Activated CD4-positive, alpha-beta memory T cell treated with anti-CD3 and anti-CD28 coated beads, Interleukin-2, amount 10 ng/mL, durations not matched to agents 7 days and 5 days (primary cell): ENCODE measurements at regions of chr16 and their contacts with region 1.

Region 1: GRCh38 chr16:30429678-30430427 is at the start of gene DCTPP1:
- DNase-seq: peak; percentile 97
- H3K4me3 Mint-ChIP-seq: no peak within 1 kb of the TSS
- H3K27ac Mint-ChIP-seq: no peak within 1 kb of the TSS
- H3K4me1 Mint-ChIP-seq: peaks cover 39% of the 10 kb centered on the region
- H3K27me3 Mint-ChIP-seq: no peaks in the 10 kb centered on the region
- total RNA-seq, gene DCTPP1: 51.3 to 51.4 TPM

Region 2: GRCh38 chr16:30091474-30092372 is 338.1 kb before region 1 on chr16 and contains the start of gene TBX6:
- CTCF ChIA-PET with region 1: interaction called, 11 read pairs
- POLR2A ChIA-PET with region 1: interaction called, 3 read pairs
- DNase-seq: peak; percentile 95
- H3K4me3 Mint-ChIP-seq: peak within 1 kb of the TSS; percentile 88
- H3K27ac Mint-ChIP-seq: peak within 1 kb of the TSS; percentile 96
- H3K4me1 Mint-ChIP-seq: peaks cover 63% of the 10 kb centered on the region
- H3K27me3 Mint-ChIP-seq: no peaks in the 10 kb centered on the region
- total RNA-seq, gene TBX6: 1.9 to 2.5 TPM

Region 3: GRCh38 chr16:30340621-30341020 is 89.2 kb before region 1 on chr16:
- CTCF ChIA-PET with region 1: no interaction called
- POLR2A ChIA-PET with region 1: no interaction called
- DNase-seq: no peak
- H3K4me3 Mint-ChIP-seq: no peak overlapping the region
- H3K27ac Mint-ChIP-seq: no peak overlapping the region
- H3K4me1 Mint-ChIP-seq: peaks cover 14% of the 10 kb centered on the region
- H3K27me3 Mint-ChIP-seq: no peaks in the 10 kb centered on the region

Region 4: GRCh38 chr16:30417529-30418349 is 12.1 kb before region 1 on chr16:
- CTCF ChIA-PET with region 1: interaction called, 58 read pairs
- POLR2A ChIA-PET with region 1: interaction called, 36 read pairs
- DNase-seq: peak; percentile 92
- H3K4me3 Mint-ChIP-seq: peak overlapping the region; percentile 60
- H3K27ac Mint-ChIP-seq: peak overlapping the region; percentile 64
- H3K4me1 Mint-ChIP-seq: peaks cover 41% of the 10 kb centered on the region
- H3K27me3 Mint-ChIP-seq: no peaks in the 10 kb centered on the region

Region 5: GRCh38 chr16:30472328-30472942 is 42.6 kb after region 1 on chr16 and contains the start of gene ITGAL:
- CTCF ChIA-PET with region 1: interaction called, 43 read pairs
- POLR2A ChIA-PET with region 1: interaction called, 41 read pairs
- DNase-seq: peak; percentile 92
- H3K4me3 Mint-ChIP-seq: peak within 1 kb of the TSS; percentile 98
- H3K27ac Mint-ChIP-seq: peak within 1 kb of the TSS; percentile 96
- H3K4me1 Mint-ChIP-seq: peaks cover 58% of the 10 kb centered on the region
- H3K27me3 Mint-ChIP-seq: no peaks in the 10 kb centered on the region
- total RNA-seq, gene ITGAL: 583 to 586 TPM

Region 6: DNA sequence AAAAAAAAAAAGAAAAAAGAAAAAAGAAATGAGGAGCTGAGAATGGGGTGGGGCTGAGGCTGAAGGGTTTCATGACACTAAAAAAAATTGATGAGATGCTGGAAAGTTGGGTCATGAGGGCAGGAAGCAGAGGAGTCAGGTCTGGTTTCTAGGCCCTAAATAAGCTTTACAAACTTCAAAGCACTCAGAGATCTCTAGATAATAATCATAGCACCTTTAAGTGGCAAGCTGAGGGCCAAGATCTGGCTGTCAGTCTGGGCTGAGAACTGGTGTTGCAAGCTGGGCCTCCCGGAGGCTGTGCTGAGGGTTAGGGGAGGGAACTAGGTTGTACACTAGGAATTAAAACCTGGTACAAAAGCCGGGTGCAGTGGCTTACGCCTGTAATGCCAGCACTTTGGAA is 121.9 kb after region 1 on chr16:
- CTCF ChIA-PET with region 1: interaction called, 12 read pairs
- POLR2A ChIA-PET with region 1: no interaction called
- DNase-seq: peak; percentile 78
- H3K4me3 Mint-ChIP-seq: peak overlapping the region; percentile 58
- H3K27ac Mint-ChIP-seq: peak overlapping the region; percentile 98
- H3K4me1 Mint-ChIP-seq: peaks cover 57% of the 10 kb centered on the region
- H3K27me3 Mint-ChIP-seq: no peaks in the 10 kb centered on the region

Region 7: DNA sequence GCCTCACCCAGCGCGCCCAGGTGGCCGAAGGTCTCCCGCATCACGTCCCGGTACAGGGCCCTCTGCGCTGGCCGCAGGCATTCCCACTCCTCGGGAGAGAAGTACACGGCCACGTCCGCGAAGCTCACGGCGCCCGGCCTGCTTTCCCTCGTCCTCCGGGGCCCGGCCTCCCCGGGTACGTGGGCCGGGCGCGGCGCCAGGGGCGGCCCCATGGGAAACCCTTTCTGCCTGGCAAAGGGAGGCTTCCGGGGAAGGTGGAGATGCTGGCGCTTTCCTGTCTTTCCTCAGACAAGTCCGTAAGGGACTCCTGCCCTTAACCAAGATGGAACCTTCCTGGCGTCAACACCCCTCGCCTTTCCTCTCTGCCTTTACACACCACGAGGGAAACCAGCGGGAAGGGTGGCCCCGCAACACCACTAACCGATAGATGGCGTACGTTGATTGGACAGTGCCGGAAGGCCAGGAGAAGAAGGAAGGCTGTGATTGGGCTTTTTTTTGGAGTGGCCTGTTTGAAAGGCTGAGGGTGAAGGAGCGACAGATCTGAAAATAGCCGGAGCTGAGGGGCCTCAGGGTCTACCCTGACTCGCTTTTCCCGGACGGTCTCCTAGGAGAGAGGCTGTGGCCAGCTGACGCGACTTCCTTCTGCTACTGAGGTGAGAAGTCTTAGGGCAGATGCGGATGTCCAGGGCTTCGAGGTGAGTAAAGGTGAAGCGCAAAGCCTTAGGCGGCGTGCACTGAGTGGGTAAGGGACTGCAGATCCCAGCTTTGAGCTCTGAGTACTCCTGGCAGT is 155.7 kb after region 1 on chr16 and contains the start of gene ZNF785:
- CTCF ChIA-PET with region 1: interaction called, 4 read pairs
- POLR2A ChIA-PET with region 1: interaction called, 10 read pairs
- DNase-seq: peak; percentile 96
- H3K4me3 Mint-ChIP-seq: peak within 1 kb of the TSS; percentile 77
- H3K27ac Mint-ChIP-seq: peak within 1 kb of the TSS; percentile 61
- H3K4me1 Mint-ChIP-seq: peaks cover 36% of the 10 kb centered on the region
- H3K27me3 Mint-ChIP-seq: no peaks in the 10 kb centered on the region
- total RNA-seq, gene ZNF785: 12.9 to 13.3 TPM

Region 8: DNA sequence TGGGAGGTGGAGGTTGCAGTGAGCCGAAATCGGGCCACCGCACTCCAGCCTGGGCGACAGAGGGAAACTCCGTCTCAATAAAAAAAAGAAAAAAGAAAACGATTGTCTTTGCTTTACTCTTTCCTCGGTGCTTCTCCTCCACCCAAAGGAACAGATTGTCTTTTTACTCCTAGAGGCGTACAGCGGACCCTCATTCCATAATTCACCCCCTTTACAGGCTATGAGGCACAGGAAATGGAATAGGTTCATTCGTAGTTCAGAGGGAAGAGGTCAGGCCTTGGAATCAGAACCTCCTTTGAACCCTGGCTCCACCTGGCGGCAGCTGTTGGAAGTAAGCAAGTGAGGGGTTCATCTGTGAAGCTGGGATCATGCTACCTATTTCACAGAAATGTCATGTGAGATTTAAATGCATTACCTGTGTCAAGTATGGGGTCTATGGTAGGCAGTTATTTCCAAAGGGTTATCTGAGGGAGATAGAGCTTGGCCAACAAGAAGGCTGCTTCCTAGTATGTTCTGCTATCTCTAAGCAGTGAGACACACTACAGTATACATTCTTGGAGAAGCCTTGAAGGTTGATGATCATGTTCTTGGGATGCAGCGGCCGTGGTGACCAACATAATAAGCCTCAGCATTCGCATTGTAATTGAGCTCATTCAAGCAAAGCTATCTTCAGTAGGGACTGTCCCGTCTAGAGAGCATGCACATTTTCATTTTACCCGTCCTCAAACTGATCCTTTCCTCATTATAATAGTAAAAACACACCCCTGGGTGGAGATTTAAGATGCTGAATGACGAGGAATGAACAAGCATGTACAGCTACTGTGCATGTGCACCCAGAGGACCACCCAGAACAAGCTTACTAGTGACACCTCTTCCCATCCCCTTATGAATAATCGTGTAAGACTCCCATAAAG is 199.0 kb after region 1 on chr16:
- CTCF ChIA-PET with region 1: interaction called, 16 read pairs
- POLR2A ChIA-PET with region 1: interaction called, 5 read pairs
- DNase-seq: peak; percentile 90
- H3K4me3 Mint-ChIP-seq: peak overlapping the region; percentile 63
- H3K27ac Mint-ChIP-seq: peak overlapping the region; percentile 53
- H3K4me1 Mint-ChIP-seq: peaks cover 16% of the 10 kb centered on the region
- H3K27me3 Mint-ChIP-seq: peaks cover 2% of the 10 kb centered on the region